KBM-7 (cell line): ENCODE measurements at regions of chr3 and their contacts with region 1.

Region 1: DNA sequence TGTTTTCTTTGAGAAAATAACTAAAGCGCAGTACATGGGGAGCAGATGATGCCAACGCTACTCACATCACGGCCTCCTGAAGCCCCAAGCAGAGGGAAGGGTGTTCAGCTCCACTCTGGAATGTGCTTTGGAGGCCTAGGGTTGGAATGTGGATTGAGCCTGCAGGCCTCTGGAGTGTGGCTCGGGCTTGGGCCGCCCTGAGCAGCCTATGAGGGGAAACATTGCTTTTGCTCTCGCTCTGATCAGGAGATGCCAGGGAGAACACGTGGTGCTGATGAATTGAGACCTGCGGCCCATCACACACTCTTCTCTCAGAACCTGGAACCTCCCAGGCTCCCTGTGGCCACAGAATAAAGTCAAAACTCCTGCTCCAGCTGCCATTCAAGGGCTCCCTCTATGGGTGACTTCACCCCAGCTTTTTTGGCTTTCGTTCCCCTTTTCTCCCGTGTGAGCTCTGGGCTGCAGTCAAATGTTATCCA is 23.3 kb downstream of the CCDC13 start:
- DNase-seq: peak; percentile 64

Region 2: GRCh38 chr3:42264399-42265058 is 485.3 kb before region 1 on chr3:
- in situ Hi-C with region 1: loop called (anchors 25 kb)
- DNase-seq: no peak

Region 3: GRCh38 chr3:43236008-43236407 is 486.2 kb after region 1 on chr3:
- in situ Hi-C with region 1: no loop called
- DNase-seq: no peak